CD8-positive, alpha-beta T cell (primary cell): ENCODE measurements at regions of chr3 and their contacts with region 1.

Region 1: GRCh38 chr3:141360888-141361598 is 7.3 kb upstream of the ZBTB38 start:
- DNase-seq: peak in 2 of 9 experiments; percentile 60 to 72
- ATAC-seq: peak; percentile 68
- H3K4me3 ChIP-seq: no peak overlapping the region
- H3K4me3 Mint-ChIP-seq: peak overlapping the region; percentile 48
- H3K27ac ChIP-seq: no peak overlapping the region
- H3K27ac Mint-ChIP-seq: no peak overlapping the region
- H3K4me1 ChIP-seq: peaks cover 4% of the 10 kb centered on the region
- H3K4me1 Mint-ChIP-seq: peaks cover 7% of the 10 kb centered on the region
- H3K27me3 ChIP-seq: no peaks in the 10 kb centered on the region
- H3K27me3 Mint-ChIP-seq: no peaks in the 10 kb centered on the region
- CTCF ChIP-seq: peak; percentile 69

Region 2: DNA sequence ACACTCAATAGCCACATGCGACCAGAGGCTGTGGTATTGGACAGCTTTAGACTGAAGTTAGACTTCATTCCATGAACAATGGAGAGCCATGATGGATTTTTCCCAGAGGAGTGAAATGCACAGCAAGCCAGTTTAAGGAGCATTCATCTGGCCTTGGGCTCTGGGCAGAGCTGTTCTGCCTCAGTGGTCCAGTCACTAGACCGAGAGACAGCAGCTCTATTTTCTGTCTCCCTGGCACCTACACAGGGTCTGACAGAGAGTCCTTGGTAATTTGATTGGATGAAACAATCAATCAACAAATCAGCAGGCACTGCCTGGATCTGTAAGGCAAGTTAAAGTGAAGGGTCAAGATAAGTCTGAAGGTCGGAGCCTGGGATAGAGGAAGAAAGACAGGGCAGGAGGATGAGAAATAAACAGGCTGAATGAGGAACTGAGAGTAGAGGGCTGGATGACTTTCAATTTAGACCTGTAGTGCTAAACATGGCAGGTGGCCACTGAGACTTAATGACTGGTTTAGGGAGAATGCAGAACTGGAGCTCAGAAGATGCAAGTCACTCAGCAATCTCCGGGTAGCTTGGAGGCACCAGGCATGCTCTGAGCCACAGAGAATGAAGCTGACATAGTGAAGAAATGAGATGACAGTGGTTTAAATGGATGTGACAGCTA is 517.9 kb before region 1 on chr3:
- CTCF ChIA-PET with region 1: no interaction called
- POLR2A ChIA-PET with region 1: no interaction called
- intact Hi-C with region 1: no loop called
- DNase-seq: peak in 1 of 9 experiments; percentile 14
- ATAC-seq: no peak
- H3K4me3 ChIP-seq: no peak overlapping the region
- H3K4me3 Mint-ChIP-seq: no peak overlapping the region
- H3K27ac ChIP-seq: no peak overlapping the region
- H3K27ac Mint-ChIP-seq: no peak overlapping the region
- H3K4me1 ChIP-seq: no peaks in the 10 kb centered on the region
- H3K4me1 Mint-ChIP-seq: peaks cover 16% of the 10 kb centered on the region
- H3K27me3 ChIP-seq: no peaks in the 10 kb centered on the region
- H3K27me3 Mint-ChIP-seq: no peaks in the 10 kb centered on the region
- CTCF ChIP-seq: no peak

Region 3: GRCh38 chr3:141303481-141304223 is 57.4 kb before region 1 on chr3:
- CTCF ChIA-PET with region 1: interaction called, 45 read pairs
- POLR2A ChIA-PET with region 1: interaction called, 4 read pairs
- intact Hi-C with region 1: loop called (anchors 2 kb)
- DNase-seq: peak in 8 of 9 experiments; percentile 40 to 85 (median 64)
- ATAC-seq: peak; percentile 56
- H3K4me3 ChIP-seq: no peak overlapping the region
- H3K4me3 Mint-ChIP-seq: no peak overlapping the region
- H3K27ac ChIP-seq: no peak overlapping the region
- H3K27ac Mint-ChIP-seq: no peak overlapping the region
- H3K4me1 ChIP-seq: peaks cover 60% of the 10 kb centered on the region
- H3K4me1 Mint-ChIP-seq: peaks cover 66% of the 10 kb centered on the region
- H3K27me3 ChIP-seq: no peaks in the 10 kb centered on the region
- H3K27me3 Mint-ChIP-seq: no peaks in the 10 kb centered on the region
- CTCF ChIP-seq: peak; percentile 85

Region 4: DNA sequence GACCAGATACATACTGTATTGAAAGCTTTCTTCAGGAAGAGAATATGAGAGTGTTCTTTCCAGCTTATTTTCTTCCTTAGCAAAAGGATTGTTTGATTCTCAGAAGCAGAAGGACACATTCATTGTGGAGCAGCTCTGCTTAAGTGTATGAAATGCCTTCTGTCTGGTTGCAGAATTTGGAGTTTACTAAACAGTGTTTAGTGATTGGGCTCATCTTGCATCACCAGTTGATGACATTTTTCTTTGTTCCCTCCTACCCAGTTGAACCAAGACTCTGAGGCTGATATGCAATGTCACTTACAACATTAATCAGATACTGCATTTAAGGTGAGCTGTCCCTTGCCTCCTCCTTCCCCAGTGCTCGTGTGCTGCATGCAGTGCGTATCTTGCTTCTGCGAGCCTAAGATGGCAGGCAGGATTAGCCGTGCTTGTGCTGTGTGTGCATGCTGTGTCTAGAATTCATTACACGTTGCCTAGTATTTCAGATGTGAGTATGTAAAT is 25.6 kb after region 1 on chr3:
- CTCF ChIA-PET with region 1: interaction called, 17 read pairs
- POLR2A ChIA-PET with region 1: no interaction called
- intact Hi-C with region 1: no loop called
- DNase-seq: no peak
- ATAC-seq: no peak
- H3K4me3 ChIP-seq: no peak overlapping the region
- H3K4me3 Mint-ChIP-seq: peak overlapping the region; percentile 49
- H3K27ac ChIP-seq: no peak overlapping the region
- H3K27ac Mint-ChIP-seq: no peak overlapping the region
- H3K4me1 ChIP-seq: no peaks in the 10 kb centered on the region
- H3K4me1 Mint-ChIP-seq: peaks cover 11% of the 10 kb centered on the region
- H3K27me3 ChIP-seq: no peaks in the 10 kb centered on the region
- H3K27me3 Mint-ChIP-seq: no peaks in the 10 kb centered on the region
- CTCF ChIP-seq: no peak

Region 5: DNA sequence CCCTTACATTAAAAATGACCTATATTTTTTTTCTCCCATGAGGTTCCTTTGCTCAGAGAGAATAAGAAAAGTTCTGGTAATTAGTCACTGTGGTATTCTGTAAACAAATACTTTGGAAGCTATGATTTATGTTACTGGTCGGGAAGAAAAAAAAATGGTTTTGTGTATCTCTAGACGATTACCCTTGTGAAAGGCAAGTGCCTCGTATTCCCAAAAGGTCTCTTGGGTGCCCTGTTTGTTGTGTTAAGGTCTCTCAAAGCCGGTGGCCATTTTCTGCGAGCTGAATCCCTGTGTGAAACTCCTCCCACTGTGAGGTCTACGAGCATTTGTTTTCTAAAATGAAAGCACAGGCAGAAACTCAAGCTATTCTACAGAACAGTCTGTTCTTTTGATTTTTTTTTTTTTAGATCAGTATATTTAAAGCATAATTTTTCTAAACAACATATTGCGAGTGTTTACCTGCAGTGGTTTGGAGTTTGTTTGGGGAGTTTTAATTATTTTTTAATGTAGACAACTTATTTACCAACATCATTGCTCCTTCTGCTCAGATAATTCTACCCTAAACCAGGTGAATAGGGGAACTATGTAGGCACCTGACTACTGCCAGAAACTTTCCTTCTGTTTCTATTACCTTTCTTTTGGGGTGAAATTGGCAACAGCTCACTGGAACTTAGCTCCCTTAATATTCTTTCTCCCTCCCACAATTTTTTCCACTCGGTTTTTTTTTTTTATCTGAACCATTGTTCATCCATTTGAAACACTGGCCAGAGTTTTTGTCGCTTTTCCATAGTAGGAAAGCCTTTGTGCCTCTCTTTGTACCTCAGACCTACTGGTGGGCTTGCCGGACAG is 51.3 kb after region 1 on chr3:
- CTCF ChIA-PET with region 1: interaction called, 12 read pairs
- POLR2A ChIA-PET with region 1: no interaction called
- intact Hi-C with region 1: no loop called
- DNase-seq: peak; percentile 27 to 88 (median 55)
- ATAC-seq: peak; percentile 64
- H3K4me3 ChIP-seq: peak overlapping the region; percentile 16 to 24
- H3K4me3 Mint-ChIP-seq: peak overlapping the region; percentile 84
- H3K27ac ChIP-seq: peak overlapping the region; percentile 61 to 80
- H3K27ac Mint-ChIP-seq: peak overlapping the region; percentile 99
- H3K4me1 ChIP-seq: peaks cover 78% of the 10 kb centered on the region
- H3K4me1 Mint-ChIP-seq: peaks cover 86% of the 10 kb centered on the region
- H3K27me3 ChIP-seq: no peaks in the 10 kb centered on the region
- H3K27me3 Mint-ChIP-seq: no peaks in the 10 kb centered on the region
- CTCF ChIP-seq: no peak

Region 6: DNA sequence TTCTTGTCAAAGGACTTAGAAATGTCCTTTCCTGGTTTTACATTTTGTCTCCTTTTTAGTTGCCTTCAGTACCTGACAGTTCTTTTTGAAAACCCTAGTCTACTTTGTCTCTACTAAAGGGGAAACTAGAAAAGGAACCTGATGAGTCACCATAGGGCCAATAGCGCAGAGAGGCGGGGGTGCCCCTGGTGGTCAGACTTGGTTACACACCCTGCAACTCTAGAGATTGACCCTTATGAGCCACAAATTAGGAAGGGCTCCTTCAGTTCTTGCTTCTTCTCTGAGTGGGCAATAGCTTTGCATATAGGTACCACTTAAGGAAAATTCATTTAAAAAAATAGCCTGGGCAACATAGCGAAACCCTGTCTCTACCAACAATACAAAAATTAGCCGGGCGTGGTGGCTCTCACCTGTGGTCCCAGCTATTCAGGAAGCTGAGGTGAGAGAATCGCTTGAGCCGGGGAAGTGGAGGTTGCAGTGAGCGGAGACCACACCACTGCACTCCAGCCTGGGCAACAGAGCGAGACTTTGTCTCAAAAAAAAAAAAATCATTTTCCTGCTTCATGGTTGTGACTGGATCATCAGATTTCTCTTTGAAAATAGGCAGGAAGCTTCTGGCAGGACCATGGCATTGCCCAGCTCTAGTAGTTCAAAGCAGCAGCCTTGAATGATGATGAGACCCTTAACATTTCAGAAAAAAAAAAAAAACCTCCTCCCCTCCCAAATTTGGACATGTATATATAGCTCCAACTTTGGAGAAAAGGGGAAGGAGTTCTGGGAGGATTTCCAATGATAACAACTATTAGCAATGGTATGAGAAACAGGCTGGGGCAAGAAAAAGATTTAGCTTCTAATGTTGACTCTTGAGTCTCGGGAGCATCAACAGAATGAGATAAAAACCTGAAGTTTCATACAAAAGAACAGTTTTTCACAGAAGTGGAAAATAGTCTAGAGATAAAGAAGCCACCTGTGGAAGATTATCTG is 80.6 kb after region 1 on chr3:
- CTCF ChIA-PET with region 1: interaction called, 79 read pairs
- POLR2A ChIA-PET with region 1: interaction called, 3 read pairs
- intact Hi-C with region 1: loop called (anchors 1 to 2 kb)
- DNase-seq: peak; percentile 63 to 85 (median 75)
- ATAC-seq: peak; percentile 100
- H3K4me3 ChIP-seq: no peak overlapping the region
- H3K4me3 Mint-ChIP-seq: peak overlapping the region; percentile 39
- H3K27ac ChIP-seq: peak overlapping the region in 1 of 2 experiments; percentile 64
- H3K27ac Mint-ChIP-seq: peak overlapping the region; percentile 83
- H3K4me1 ChIP-seq: peaks cover 9% of the 10 kb centered on the region
- H3K4me1 Mint-ChIP-seq: peaks cover 38% of the 10 kb centered on the region
- H3K27me3 ChIP-seq: no peaks in the 10 kb centered on the region
- H3K27me3 Mint-ChIP-seq: no peaks in the 10 kb centered on the region
- CTCF ChIP-seq: peak; percentile 88

Region 7: GRCh38 chr3:141561426-141562034 is 200.5 kb after region 1 on chr3:
- CTCF ChIA-PET with region 1: interaction called, 7 read pairs
- POLR2A ChIA-PET with region 1: no interaction called
- intact Hi-C with region 1: loop called (anchors 2 kb)
- DNase-seq: peak in 6 of 9 experiments; percentile 28 to 83 (median 46)
- ATAC-seq: peak; percentile 78
- H3K4me3 ChIP-seq: no peak overlapping the region
- H3K4me3 Mint-ChIP-seq: no peak overlapping the region
- H3K27ac ChIP-seq: no peak overlapping the region
- H3K27ac Mint-ChIP-seq: peak overlapping the region; percentile 66
- H3K4me1 ChIP-seq: peaks cover 46% of the 10 kb centered on the region
- H3K4me1 Mint-ChIP-seq: peaks cover 38% of the 10 kb centered on the region
- H3K27me3 ChIP-seq: no peaks in the 10 kb centered on the region
- H3K27me3 Mint-ChIP-seq: no peaks in the 10 kb centered on the region
- CTCF ChIP-seq: peak; percentile 100